CD4-positive, alpha-beta T cell (primary cell): ENCODE measurements at regions of chr5 and their contacts with region 1.

Region 1: GRCh38 chr5:38441453-38442246 is 114.8 kb downstream of the LIFR start:
- DNase-seq: peak; percentile 63 to 87 (median 72)
- ATAC-seq: peak; percentile 99
- H3K4me3 ChIP-seq: no peak overlapping the region
- H3K4me3 Mint-ChIP-seq: no peak overlapping the region
- H3K27ac ChIP-seq: no peak overlapping the region
- H3K27ac Mint-ChIP-seq: no peak overlapping the region
- H3K4me1 ChIP-seq: no peaks in the 10 kb centered on the region
- H3K4me1 Mint-ChIP-seq: no peaks in the 10 kb centered on the region
- H3K27me3 ChIP-seq: peaks cover 19 to 25% of the 10 kb centered on the region in 2 experiments
- H3K27me3 Mint-ChIP-seq: peaks cover 59% of the 10 kb centered on the region
- CTCF ChIP-seq: peak; percentile 94

Region 2: DNA sequence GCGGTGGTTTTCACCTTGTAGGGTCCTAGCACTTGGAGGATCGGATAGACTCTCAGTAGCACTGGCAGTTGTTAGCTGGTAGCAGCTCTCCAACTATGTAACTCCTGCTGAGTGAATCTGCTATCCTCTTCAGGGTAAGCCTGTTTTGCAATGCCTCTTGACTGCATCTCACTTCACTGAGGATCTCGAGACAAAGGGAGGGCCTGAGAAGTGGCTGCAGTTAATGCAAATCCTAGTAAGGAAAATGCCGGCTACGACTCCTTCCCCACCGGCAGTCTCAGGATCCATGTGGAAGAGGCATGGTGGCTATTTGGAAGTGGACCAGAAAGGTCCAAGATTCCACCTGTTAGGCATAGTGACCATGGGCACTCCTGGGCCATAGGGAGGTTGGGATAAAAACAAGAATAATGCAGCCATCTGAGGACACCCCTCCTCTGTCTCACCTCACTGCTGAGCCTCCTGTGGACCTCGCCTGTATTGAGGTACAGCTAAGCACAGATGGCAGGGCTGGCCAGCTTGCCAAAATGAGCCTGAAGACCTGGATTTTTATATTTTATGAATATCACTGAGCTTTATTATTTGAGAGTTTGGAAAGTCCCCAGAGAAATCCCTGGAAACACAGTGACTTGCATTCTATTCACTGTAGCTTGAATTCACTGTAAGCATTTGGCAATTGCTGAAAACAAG is 31.2 kb before region 1 on chr5:
- CTCF ChIA-PET with region 1: no interaction called
- POLR2A ChIA-PET with region 1: no interaction called
- intact Hi-C with region 1: no loop called
- DNase-seq: no peak
- ATAC-seq: no peak
- H3K4me3 ChIP-seq: no peak overlapping the region
- H3K4me3 Mint-ChIP-seq: no peak overlapping the region
- H3K27ac ChIP-seq: no peak overlapping the region
- H3K27ac Mint-ChIP-seq: no peak overlapping the region
- H3K4me1 ChIP-seq: no peaks in the 10 kb centered on the region
- H3K4me1 Mint-ChIP-seq: no peaks in the 10 kb centered on the region
- H3K27me3 ChIP-seq: peaks cover 6% of the 10 kb centered on the region in 2 experiments
- H3K27me3 Mint-ChIP-seq: peaks cover 53% of the 10 kb centered on the region
- CTCF ChIP-seq: no peak

Region 3: GRCh38 chr5:38453506-38453905 is 11.9 kb after region 1 on chr5:
- CTCF ChIA-PET with region 1: interaction called, 22 read pairs
- POLR2A ChIA-PET with region 1: interaction called, 15 read pairs
- intact Hi-C with region 1: no loop called
- DNase-seq: peak in 13 of 14 experiments; percentile 2 to 86 (median 28)
- ATAC-seq: peak; percentile 90
- H3K4me3 ChIP-seq: no peak overlapping the region
- H3K4me3 Mint-ChIP-seq: peak overlapping the region; percentile 0
- H3K27ac ChIP-seq: no peak overlapping the region
- H3K27ac Mint-ChIP-seq: no peak overlapping the region
- H3K4me1 ChIP-seq: peaks cover 37% of the 10 kb centered on the region
- H3K4me1 Mint-ChIP-seq: peaks cover 27% of the 10 kb centered on the region
- H3K27me3 ChIP-seq: peaks cover 54 to 62% of the 10 kb centered on the region in 2 experiments
- H3K27me3 Mint-ChIP-seq: peaks cover 86% of the 10 kb centered on the region
- CTCF ChIP-seq: no peak

Region 4: DNA sequence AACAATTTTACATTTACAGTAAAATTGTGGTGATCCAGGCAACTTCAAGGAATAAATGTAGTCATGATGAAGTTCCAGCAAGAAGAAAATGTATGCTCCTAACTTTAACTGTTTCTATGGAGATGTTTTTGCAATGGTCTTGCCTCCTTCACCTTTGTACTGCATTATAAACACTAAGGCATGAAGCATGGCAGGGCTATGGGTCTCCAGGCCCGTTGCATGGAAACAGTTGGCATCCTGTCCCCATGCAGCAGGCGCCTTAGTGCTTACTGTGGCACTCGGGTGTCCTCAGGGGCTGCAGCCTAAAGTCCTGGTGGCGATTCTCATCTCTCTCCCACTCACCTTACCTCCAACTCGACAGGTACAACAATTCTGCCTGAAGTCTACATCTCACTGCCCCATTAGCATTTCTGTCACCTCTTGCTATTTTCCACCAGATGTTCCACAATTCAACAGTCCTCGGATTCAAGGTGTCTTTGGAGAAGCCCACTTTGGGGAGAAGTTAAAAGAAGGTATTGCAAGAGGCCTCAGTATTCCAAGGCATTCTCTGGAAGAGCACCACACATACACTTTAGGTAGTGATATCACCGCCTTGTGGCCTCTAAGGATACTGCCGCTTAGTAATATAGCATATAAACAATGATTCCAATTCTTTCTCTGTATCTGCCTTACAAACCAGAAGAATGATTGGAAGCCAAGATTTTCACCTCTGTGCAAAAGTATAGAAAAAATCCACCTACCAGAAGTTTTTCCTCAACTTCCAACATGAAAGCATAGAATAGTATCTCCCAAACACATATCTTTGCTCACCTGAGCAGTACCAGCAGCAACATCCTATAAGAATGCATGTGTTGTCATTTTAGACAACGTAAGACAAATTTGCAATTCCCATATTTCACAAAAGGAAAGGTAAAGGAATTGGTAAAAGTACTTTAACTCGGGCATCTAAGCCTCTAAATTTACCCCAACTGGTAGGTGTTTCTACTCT is 109.7 kb after region 1 on chr5:
- CTCF ChIA-PET with region 1: interaction called, 8 read pairs
- POLR2A ChIA-PET with region 1: no interaction called
- intact Hi-C with region 1: loop called (anchors 1 to 5 kb)
- DNase-seq: peak in 3 of 14 experiments; percentile 11 to 14 (median 12)
- ATAC-seq: no peak
- H3K4me3 ChIP-seq: no peak overlapping the region
- H3K4me3 Mint-ChIP-seq: no peak overlapping the region
- H3K27ac ChIP-seq: no peak overlapping the region
- H3K27ac Mint-ChIP-seq: no peak overlapping the region
- H3K4me1 ChIP-seq: peaks cover 6% of the 10 kb centered on the region
- H3K4me1 Mint-ChIP-seq: peaks cover 5% of the 10 kb centered on the region
- H3K27me3 ChIP-seq: peaks cover 12 to 30% of the 10 kb centered on the region in 2 experiments
- H3K27me3 Mint-ChIP-seq: peaks cover 48% of the 10 kb centered on the region
- CTCF ChIP-seq: peak; percentile 26

Region 5: DNA sequence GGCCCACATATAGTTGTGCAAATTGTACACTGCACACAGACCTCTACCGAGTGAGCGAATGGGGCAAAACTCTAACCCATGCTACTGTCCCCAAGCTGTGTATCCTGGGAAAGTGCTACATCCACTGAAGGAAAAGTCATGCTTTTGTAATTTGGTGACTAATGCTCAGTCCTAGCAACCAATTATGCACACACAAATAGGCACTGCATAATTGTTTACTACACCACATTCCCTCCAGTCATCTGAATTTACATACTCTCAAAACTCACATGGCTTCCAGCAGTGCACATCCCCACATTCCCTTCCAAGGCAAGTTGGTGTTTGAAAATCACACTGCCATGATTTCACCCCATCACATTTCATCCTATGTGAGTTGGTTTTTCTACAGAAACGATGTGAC is 278.3 kb after region 1 on chr5:
- CTCF ChIA-PET with region 1: no interaction called
- POLR2A ChIA-PET with region 1: no interaction called
- intact Hi-C with region 1: no loop called
- DNase-seq: no peak
- ATAC-seq: no peak
- H3K4me3 ChIP-seq: no peak overlapping the region
- H3K4me3 Mint-ChIP-seq: no peak overlapping the region
- H3K27ac ChIP-seq: no peak overlapping the region
- H3K27ac Mint-ChIP-seq: no peak overlapping the region
- H3K4me1 ChIP-seq: no peaks in the 10 kb centered on the region
- H3K4me1 Mint-ChIP-seq: no peaks in the 10 kb centered on the region
- H3K27me3 ChIP-seq: no peaks in the 10 kb centered on the region
- H3K27me3 Mint-ChIP-seq: peaks cover 6% of the 10 kb centered on the region
- CTCF ChIP-seq: no peak

Region 6: DNA sequence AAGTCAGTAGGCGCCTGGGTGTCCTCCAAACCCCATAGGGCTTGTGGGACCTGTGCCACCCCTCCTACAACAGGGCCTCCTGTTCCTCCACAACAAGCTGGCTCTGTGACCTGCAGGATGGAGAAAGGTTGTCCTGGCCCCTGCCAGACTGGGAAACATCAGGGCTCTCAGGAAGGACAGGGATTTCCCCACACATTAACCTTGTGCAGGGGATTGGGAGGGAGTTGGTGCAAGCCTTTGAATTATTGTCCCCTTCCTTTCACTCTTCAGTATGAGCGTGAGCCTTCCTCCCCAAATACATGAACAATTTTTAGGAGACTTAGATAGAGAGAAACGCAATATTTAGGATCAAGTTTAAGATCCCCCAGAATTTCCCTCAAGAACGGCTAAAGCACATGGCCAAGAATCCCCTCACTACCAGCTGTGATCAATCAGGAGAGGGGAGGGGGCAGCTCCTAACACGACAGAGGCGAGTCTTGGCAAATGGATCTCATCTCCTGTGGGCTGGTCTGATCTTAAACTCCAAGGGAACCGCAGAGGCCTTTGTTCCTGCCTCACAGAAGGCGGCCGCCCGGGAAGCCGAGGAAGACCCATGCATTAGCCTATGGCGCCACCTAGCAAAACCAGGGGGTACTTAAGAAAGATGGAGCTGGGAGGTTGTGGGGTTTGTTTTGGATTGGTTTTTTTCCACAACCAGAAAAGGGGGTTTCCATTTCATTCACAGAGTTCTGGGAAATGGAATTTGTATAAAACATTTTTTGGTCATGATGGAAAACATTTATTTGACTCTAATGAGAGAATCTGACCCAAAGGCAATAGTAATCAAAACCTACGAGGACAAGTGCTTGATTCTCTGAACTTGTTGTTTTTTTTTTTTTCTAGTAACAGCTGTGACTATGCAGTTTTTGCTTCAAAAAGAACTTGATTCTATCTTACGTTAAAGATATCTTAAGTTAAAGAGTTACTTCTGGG is 368.0 kb after region 1 on chr5:
- CTCF ChIA-PET with region 1: interaction called, 16 read pairs
- POLR2A ChIA-PET with region 1: no interaction called
- intact Hi-C with region 1: no loop called
- DNase-seq: peak in 9 of 14 experiments; percentile 4 to 63 (median 11)
- ATAC-seq: no peak
- H3K4me3 ChIP-seq: no peak overlapping the region
- H3K4me3 Mint-ChIP-seq: no peak overlapping the region
- H3K27ac ChIP-seq: no peak overlapping the region
- H3K27ac Mint-ChIP-seq: no peak overlapping the region
- H3K4me1 ChIP-seq: no peaks in the 10 kb centered on the region
- H3K4me1 Mint-ChIP-seq: no peaks in the 10 kb centered on the region
- H3K27me3 ChIP-seq: peaks cover 17 to 19% of the 10 kb centered on the region in 2 experiments
- H3K27me3 Mint-ChIP-seq: peaks cover 61% of the 10 kb centered on the region
- CTCF ChIP-seq: peak; percentile 30

Region 7: DNA sequence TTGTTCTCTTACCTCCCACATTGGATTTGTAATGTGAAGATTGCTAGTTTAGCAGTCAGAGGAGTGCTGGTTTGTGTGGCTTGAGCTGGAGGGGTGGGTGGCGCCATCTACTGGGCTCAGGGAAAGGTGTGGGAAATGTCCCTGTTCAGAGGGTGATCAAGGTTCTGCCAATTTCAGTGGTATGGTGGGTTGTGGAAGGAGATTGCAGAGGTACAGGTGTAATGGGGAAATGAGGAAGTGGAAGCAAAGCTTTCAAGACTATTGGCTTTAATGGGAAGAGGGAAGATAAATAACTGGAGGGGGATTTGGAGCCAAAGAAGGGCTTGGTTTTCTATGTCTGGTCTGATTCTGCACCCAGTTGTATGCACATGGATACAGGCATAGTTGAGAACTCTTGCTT is 480.5 kb after region 1 on chr5:
- CTCF ChIA-PET with region 1: interaction called, 11 read pairs
- POLR2A ChIA-PET with region 1: no interaction called
- intact Hi-C with region 1: loop called (anchors 2 kb)
- DNase-seq: peak in 13 of 14 experiments; percentile 12 to 64 (median 28)
- ATAC-seq: peak; percentile 48
- H3K4me3 ChIP-seq: no peak overlapping the region
- H3K4me3 Mint-ChIP-seq: no peak overlapping the region
- H3K27ac ChIP-seq: no peak overlapping the region
- H3K27ac Mint-ChIP-seq: no peak overlapping the region
- H3K4me1 ChIP-seq: no peaks in the 10 kb centered on the region
- H3K4me1 Mint-ChIP-seq: no peaks in the 10 kb centered on the region
- H3K27me3 ChIP-seq: peaks cover 0 to 3% of the 10 kb centered on the region in 2 experiments
- H3K27me3 Mint-ChIP-seq: peaks cover 40% of the 10 kb centered on the region
- CTCF ChIP-seq: peak; percentile 61

Region 8: GRCh38 chr5:39570403-39571027 is 1128.9 kb after region 1 on chr5:
- CTCF ChIA-PET with region 1: interaction called, 3 read pairs
- POLR2A ChIA-PET with region 1: no interaction called
- intact Hi-C with region 1: loop called (anchors 1 to 2 kb)
- DNase-seq: peak in 3 of 14 experiments; percentile 30 to 48 (median 40)
- ATAC-seq: peak; percentile 41
- H3K4me3 ChIP-seq: no peak overlapping the region
- H3K4me3 Mint-ChIP-seq: no peak overlapping the region
- H3K27ac ChIP-seq: no peak overlapping the region
- H3K27ac Mint-ChIP-seq: no peak overlapping the region
- H3K4me1 ChIP-seq: no peaks in the 10 kb centered on the region
- H3K4me1 Mint-ChIP-seq: no peaks in the 10 kb centered on the region
- H3K27me3 ChIP-seq: no peaks in the 10 kb centered on the region
- H3K27me3 Mint-ChIP-seq: peaks cover 17% of the 10 kb centered on the region
- CTCF ChIP-seq: peak; percentile 61